ENCODE measurements at regions of chr1 and their contacts with region 1.

Region 1: GRCh38 chr1:62175568-62176179 is 19.0 kb upstream of the L1TD1 start:
- DNase-seq: no peak
- H3K4me3 ChIP-seq: no peak overlapping the region
- H3K27ac ChIP-seq: no peak overlapping the region
- H3K4me1 ChIP-seq: no peaks in the 10 kb centered on the region
- H3K27me3 ChIP-seq: peaks cover 0 to 32% (median 0%) of the 10 kb centered on the region in 4 donors
- CTCF ChIP-seq: peak; percentile 65 to 77 (median 74)
- EP300 ChIP-seq: no peak
- POLR2A ChIP-seq: no peak

Region 2: DNA sequence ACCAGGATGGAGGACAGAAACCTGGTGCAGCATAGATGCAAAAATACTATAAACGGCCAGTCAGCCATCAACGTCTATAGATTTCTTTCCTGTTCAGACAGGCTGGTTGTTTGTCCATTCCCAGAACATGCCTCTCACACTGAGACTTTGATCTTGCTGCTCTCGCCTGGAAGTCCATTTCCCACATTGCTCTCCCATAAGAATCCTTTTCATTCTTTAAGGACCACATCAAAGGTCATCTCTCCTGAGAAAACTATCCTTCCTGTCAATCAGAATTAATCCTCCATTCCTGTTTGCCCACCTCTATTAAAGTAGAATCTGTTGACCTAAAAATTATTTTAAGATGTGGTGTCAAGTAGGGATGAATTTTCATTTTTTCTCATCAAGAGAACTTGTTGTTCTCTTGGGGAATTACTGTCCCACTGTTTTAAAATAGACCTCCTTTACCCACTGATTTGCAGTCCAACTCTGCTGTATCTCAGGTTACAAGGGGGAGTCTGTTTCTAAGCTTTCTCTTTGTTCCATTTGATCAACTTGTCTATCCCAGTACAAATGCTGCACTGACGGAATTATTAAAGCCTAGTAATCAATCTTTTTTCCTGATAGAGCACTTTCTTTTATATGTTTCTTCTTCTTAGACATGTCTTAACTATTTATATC is 260.7 kb before region 1 on chr1:
- intact Hi-C with region 1: no loop called
- DNase-seq: no peak
- H3K4me3 ChIP-seq: no peak overlapping the region
- H3K27ac ChIP-seq: no peak overlapping the region
- H3K4me1 ChIP-seq: no peaks in the 10 kb centered on the region
- H3K27me3 ChIP-seq: no peaks in the 10 kb centered on the region
- CTCF ChIP-seq: no peak
- EP300 ChIP-seq: no peak
- POLR2A ChIP-seq: no peak

Region 3: DNA sequence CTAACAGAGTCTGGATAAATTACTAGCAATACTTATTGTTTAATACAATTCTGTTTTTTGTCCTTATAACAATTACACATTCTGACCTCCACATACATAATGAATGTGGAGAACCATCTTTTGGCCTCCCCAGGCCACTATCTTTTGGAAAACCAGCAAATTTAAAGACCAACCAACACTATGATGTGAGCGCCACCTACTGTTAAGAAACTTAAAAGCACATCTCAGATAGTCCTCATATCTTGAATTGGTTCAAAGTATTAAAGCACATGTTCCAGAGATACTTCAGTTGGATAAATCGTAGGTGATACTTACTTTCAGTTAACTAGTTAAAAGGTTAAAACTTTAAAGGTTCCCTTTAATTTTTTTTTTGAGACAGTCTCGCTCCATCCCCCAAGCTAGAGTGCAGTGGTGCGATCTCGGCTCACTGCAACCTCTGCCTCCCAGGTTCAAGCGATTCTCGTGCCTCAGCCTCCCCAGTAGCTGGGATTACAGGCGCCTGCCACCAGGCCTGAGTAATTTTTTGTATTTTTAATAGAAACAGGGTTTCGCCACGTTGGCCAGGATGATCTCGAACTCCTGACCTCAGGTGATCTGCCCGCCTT is 231.8 kb after region 1 on chr1:
- intact Hi-C with region 1: loop called (anchors 2 kb)
- DNase-seq: no peak
- H3K4me3 ChIP-seq: no peak overlapping the region
- H3K27ac ChIP-seq: no peak overlapping the region
- H3K4me1 ChIP-seq: no peaks in the 10 kb centered on the region
- H3K27me3 ChIP-seq: peaks cover 0 to 6% (median 0%) of the 10 kb centered on the region in 4 donors
- CTCF ChIP-seq: peak; percentile 66 to 74 (median 72)
- EP300 ChIP-seq: no peak
- POLR2A ChIP-seq: no peak

Measured in esophagus muscularis mucosa (tissue), 4 donors.